PC-9 (cell line): ENCODE measurements at regions of chr15 and their contacts with region 1.

Region 1: GRCh38 chr15:89820666-89821611 is 6.3 kb upstream of the ANPEP start:
- DNase-seq: peak in 1 of 2 experiments; percentile 88
- H3K4me3 ChIP-seq: peak overlapping the region; percentile 31; the same call in 1 of the 2 replicates
- H3K27ac ChIP-seq: peak overlapping the region; percentile 94
- H3K4me1 ChIP-seq: peaks cover 75% of the 10 kb centered on the region
- H3K27me3 ChIP-seq: no peaks in the 10 kb centered on the region
- CTCF ChIP-seq: no peak

Region 2: DNA sequence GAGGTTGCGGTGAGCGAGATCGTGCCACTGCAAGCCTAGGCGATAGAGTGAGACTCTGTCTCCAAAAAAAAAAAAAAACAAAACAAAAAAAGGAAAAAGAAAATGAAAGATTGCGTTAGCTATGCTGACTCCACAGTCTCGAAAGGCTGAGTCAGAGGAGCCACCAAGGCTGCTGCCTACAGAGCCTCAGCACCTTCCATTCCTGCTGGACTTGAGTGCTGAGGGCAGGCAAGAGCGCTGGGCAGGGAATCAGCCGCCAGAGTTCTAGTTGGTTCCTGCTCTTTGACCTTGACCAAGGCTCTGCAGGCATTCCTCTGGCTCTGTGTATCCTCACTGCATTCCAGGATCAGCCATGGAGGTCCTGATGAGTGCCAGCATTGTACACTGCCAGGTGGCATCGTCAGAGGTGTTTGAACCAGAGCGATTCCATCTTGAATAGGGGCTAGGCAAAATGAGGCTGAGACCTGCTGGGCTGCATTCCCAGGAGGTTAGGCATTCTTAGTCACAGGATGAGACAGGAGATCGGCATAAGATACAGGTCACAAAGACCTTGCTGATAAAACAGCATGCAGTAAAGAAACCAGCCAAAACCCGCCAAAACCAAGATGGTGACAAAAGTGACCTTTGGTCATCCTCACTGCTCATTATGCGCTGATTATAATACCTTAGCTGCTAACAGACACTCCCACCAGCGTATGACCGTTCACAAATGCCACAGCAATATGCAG is 38.9 kb before region 1 on chr15:
- CTCF ChIA-PET with region 1: interaction called, 3 read pairs
- POLR2A ChIA-PET with region 1: no interaction called
- intact Hi-C with region 1: loop called (anchors 2 kb)
- DNase-seq: peak; percentile 91 to 96
- H3K4me3 ChIP-seq: no peak overlapping the region
- H3K27ac ChIP-seq: peak overlapping the region; percentile 96
- H3K4me1 ChIP-seq: peaks cover 76% of the 10 kb centered on the region
- H3K27me3 ChIP-seq: no peaks in the 10 kb centered on the region
- CTCF ChIP-seq: no peak